ENCODE measurements at regions of chr7 and their contacts with region 1.

Region 1: GRCh38 chr7:115910541-115911164 is 119.9 kb downstream of the TFEC start:
- DNase-seq: peak; percentile 71
- H3K4me3 ChIP-seq: no peak overlapping the region
- H3K27ac ChIP-seq: no peak overlapping the region
- H3K4me1 ChIP-seq: no peaks in the 10 kb centered on the region
- H3K27me3 ChIP-seq: peaks cover 68% of the 10 kb centered on the region
- CTCF ChIP-seq: peak; percentile 75

Region 2: GRCh38 chr7:115851291-115851690 is 59.4 kb before region 1 on chr7:
- CTCF ChIA-PET with region 1: no interaction called
- POLR2A ChIA-PET with region 1: no interaction called
- intact Hi-C with region 1: no loop called
- DNase-seq: peak; percentile 78
- H3K4me3 ChIP-seq: no peak overlapping the region
- H3K27ac ChIP-seq: no peak overlapping the region
- H3K4me1 ChIP-seq: no peaks in the 10 kb centered on the region
- H3K27me3 ChIP-seq: peaks cover 7% of the 10 kb centered on the region
- CTCF ChIP-seq: peak; percentile 67

Region 3: GRCh38 chr7:116122972-116123595 is 212.4 kb after region 1 on chr7:
- CTCF ChIA-PET with region 1: no interaction called
- POLR2A ChIA-PET with region 1: no interaction called
- intact Hi-C with region 1: loop called (anchors 5 kb)
- DNase-seq: peak; percentile 63
- H3K4me3 ChIP-seq: no peak overlapping the region
- H3K27ac ChIP-seq: no peak overlapping the region
- H3K4me1 ChIP-seq: no peaks in the 10 kb centered on the region
- H3K27me3 ChIP-seq: no peaks in the 10 kb centered on the region
- CTCF ChIP-seq: peak; percentile 85